Activated CD4-positive, alpha-beta T cell treated with anti-CD3 and anti-CD28 coated beads for 36 hours (primary cell): ENCODE measurements at regions of chr19 and their contacts with region 1.

Region 1: GRCh38 chr19:8580710-8581281 is 3.6 kb upstream of the MYO1F start:
- DNase-seq: peak; percentile 92
- ATAC-seq: peak; percentile 70
- H3K4me3 Mint-ChIP-seq: no peak overlapping the region
- H3K27ac Mint-ChIP-seq: no peak overlapping the region
- H3K4me1 Mint-ChIP-seq: peaks cover 29% of the 10 kb centered on the region
- H3K27me3 Mint-ChIP-seq: peaks cover 2% of the 10 kb centered on the region

Region 2: GRCh38 chr19:8412783-8413628 is 167.8 kb before region 1 on chr19 and contains the start of gene MARCHF2:
- CTCF ChIA-PET with region 1: interaction called, 9 read pairs
- POLR2A ChIA-PET with region 1: no interaction called
- intact Hi-C with region 1: loop called (anchors 2 to 5 kb)
- DNase-seq: peak; percentile 97
- ATAC-seq: peak; percentile 100
- H3K4me3 Mint-ChIP-seq: peak within 1 kb of the TSS; percentile 50
- H3K27ac Mint-ChIP-seq: no peak within 1 kb of the TSS
- H3K4me1 Mint-ChIP-seq: peaks cover 5% of the 10 kb centered on the region
- H3K27me3 Mint-ChIP-seq: no peaks in the 10 kb centered on the region
- total RNA-seq, gene MARCHF2: 9.1 to 10.1 TPM

Region 3: DNA sequence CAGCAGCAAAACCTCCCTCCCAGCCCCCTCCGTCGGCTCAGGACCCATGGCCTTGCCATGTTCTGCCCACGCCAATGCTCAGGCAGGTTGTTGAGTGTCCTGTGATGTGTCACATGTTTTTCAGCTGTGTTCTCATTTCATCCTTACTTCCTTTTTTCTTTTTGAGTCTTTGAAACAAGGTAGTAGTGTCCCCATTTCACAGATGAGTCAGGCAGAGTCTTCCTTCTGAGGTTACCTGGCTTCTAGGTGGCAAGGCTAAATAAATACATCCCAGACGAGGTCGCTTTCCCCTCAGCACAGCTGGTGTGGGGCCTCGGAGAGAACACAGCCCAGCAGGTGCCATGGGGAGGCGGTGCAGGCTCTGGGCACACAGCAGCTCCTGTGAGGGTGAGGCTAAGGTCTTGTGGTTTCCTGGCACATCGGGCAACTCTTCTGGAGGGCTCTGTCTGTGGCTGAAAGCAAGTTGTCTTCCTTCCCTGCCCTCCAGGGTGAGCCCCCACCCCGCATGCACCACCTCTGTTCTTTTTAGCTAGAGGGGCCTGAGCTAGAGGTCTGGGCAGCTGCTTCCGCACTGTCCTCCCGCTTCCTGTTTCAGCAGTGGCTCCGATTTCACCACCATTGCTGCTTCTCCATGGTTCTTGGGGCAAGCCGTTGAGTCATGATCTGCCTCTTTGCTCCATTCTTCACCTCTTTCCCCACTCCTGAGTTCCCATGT is 93.5 kb before region 1 on chr19:
- CTCF ChIA-PET with region 1: interaction called, 10 read pairs
- POLR2A ChIA-PET with region 1: no interaction called
- intact Hi-C with region 1: no loop called
- DNase-seq: peak; percentile 85
- ATAC-seq: peak; percentile 90
- H3K4me3 Mint-ChIP-seq: no peak overlapping the region
- H3K27ac Mint-ChIP-seq: peak overlapping the region; percentile 95
- H3K4me1 Mint-ChIP-seq: peaks cover 38% of the 10 kb centered on the region
- H3K27me3 Mint-ChIP-seq: no peaks in the 10 kb centered on the region

Region 4: DNA sequence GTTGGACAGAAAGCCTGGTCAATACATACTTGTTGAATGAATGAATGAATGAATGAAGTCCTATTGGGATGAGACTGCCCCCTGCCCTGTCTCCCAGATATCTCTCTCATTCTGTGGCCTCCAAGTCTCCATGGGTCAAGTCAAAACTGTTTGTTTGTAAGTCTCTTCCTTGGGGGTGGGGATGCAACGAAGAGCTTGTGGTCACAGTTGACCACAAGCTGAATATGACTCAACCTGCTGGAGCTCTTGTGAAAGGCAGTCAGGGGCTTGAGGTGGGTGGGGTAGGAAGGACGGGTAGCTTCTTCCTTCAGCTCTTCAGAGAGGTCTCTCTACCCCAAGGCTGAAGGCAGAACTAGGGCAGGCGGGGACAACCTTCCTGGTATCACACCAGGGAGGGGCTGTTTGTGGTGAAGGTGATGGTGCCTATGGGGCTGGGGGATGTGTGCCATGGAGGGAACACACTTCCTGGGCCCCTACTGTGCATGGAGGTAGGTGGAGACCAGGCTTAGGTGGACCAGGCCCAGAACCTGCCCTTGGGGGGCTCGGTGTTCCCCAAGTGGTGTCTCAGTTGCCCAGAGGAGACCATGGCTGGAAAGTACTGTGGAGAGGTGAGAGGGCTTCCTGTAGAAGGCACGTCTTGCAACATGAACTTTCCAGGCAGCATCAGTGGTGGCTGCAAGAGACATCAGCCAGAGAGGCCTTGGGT is 11.6 kb before region 1 on chr19:
- CTCF ChIA-PET with region 1: interaction called, 34 read pairs
- POLR2A ChIA-PET with region 1: no interaction called
- intact Hi-C with region 1: no loop called
- DNase-seq: peak; percentile 79
- ATAC-seq: peak; percentile 79
- H3K4me3 Mint-ChIP-seq: peak overlapping the region; percentile 27
- H3K27ac Mint-ChIP-seq: peak overlapping the region; percentile 88
- H3K4me1 Mint-ChIP-seq: peaks cover 60% of the 10 kb centered on the region
- H3K27me3 Mint-ChIP-seq: no peaks in the 10 kb centered on the region

Region 5: DNA sequence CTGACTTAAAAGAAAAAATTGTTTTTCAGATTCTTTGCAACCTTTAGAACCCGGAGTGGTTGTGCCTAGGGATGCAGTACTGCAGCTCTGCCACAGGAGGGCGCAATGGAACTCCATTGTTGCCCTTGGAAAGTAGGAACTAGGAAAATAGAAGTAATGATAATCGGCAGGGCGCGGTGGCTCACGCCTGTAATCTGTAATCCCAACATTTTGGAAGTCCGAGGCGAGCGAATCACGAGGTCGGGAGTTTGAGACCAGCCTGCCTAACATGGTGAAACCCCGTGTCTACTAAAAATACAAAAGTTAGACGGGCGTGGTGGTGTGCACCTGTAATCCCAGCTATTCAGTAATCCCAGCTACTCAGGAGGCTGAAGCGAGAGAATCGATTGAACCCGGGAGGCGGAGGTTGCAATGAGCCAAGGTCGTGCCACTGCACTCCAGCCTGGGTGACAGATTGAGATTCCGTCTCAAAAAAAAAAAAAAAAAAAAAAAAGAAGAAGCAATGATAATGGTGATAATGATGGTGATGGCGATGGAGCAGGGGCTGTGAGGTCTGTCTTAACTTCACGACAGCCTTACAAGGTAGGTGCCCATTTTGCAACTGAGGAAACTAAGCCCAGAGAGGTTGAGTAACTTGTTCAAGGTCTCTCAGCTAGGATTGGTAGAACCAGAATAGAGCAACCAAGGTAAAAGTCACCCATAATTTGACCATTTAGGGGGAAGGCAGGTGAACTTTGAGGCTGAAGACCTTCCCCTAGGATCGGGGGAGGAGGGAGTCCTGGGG is 35.2 kb after region 1 on chr19:
- CTCF ChIA-PET with region 1: interaction called, 49 read pairs
- POLR2A ChIA-PET with region 1: no interaction called
- intact Hi-C with region 1: loop called in 1 of 2 experiments (anchors 2 kb)
- DNase-seq: peak; percentile 83
- ATAC-seq: peak; percentile 45
- H3K4me3 Mint-ChIP-seq: no peak overlapping the region
- H3K27ac Mint-ChIP-seq: no peak overlapping the region
- H3K4me1 Mint-ChIP-seq: peaks cover 16% of the 10 kb centered on the region
- H3K27me3 Mint-ChIP-seq: peaks cover 2% of the 10 kb centered on the region

Region 6: GRCh38 chr19:8697671-8698432 is 117.1 kb after region 1 on chr19:
- CTCF ChIA-PET with region 1: interaction called, 7 read pairs
- POLR2A ChIA-PET with region 1: no interaction called
- intact Hi-C with region 1: loop called in 1 of 2 experiments (anchors 1 kb)
- DNase-seq: peak; percentile 51
- ATAC-seq: no peak
- H3K4me3 Mint-ChIP-seq: no peak overlapping the region
- H3K27ac Mint-ChIP-seq: no peak overlapping the region
- H3K4me1 Mint-ChIP-seq: peaks cover 20% of the 10 kb centered on the region
- H3K27me3 Mint-ChIP-seq: peaks cover 4% of the 10 kb centered on the region

Region 7: DNA sequence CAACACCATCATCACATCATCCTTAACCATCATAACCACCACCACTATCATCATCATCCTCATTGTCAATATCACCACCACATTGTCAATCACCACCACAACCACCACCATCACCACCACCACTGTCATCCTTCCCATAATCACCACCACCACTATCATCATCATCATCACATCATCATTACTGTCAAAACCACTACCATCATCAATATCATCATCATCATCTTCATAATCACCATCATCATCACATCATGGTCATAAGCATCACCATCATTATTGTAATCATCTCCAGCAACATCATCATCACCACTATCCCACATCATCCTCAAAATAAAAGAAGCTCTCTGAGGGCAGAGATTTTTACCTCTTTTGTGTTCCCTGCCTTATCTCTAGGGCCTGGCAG is 303.6 kb after region 1 on chr19:
- CTCF ChIA-PET with region 1: no interaction called
- POLR2A ChIA-PET with region 1: no interaction called
- intact Hi-C with region 1: no loop called
- DNase-seq: no peak
- ATAC-seq: no peak
- H3K4me3 Mint-ChIP-seq: no peak overlapping the region
- H3K27ac Mint-ChIP-seq: no peak overlapping the region
- H3K4me1 Mint-ChIP-seq: no peaks in the 10 kb centered on the region
- H3K27me3 Mint-ChIP-seq: no peaks in the 10 kb centered on the region